Heart left ventricle (tissue), 16 donors: ENCODE measurements at regions of chr16 and their contacts with region 1.

Region 1: DNA sequence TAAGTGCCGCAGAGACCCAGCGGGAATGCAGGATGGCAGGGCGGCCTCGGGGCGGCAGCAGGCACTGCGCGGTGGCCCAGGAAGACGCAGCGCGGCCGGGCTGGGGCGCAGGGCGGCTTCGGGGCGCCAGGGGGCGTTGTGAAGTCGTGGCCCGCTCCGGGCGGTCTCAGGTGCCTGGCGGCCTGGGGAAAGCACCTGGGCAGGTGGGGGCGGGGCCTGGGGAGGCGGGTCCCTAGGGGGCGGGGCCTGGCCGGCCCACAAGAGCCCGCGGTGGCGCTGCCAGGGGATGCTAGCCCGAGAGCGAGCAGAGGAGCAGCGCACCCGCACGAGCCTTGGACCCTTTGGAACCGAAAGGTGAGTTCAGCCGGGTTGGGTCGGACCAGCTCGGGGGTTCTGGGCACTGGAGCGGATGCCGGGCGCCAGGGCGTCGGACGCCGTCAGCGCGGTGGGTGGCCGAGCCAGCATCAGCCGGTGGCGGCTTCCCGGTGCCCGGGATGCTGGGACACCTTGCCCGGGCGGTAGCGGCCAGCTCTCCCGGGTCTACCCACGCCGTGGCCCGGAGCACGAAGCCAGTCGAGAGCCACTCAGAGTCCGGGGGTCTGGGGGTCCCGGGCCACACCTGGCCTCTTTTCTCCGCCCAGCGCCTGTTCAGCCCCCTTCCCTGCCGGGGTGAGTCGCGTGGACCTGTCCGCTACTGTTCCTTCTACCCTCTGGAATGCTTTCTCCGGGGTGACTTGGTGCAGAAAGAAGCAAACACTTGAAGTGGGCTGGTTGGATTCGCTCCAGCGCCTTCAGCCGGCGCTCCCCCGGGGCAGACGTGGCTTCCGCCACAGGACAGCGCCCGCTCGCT is at the start of gene SCNN1G:
- DNase-seq: peak; percentile 52 to 87 (median 68)
- ATAC-seq: peak; percentile 79 to 97 (median 96)
- H3K4me3 ChIP-seq: peak within 1 kb of the TSS in 11 of 12 donors; percentile 34 to 52 (median 44)
- H3K27ac ChIP-seq: no peak within 1 kb of the TSS
- H3K4me1 ChIP-seq: peaks cover 0 to 28% (median 12%) of the 10 kb centered on the region in 12 donors
- H3K27me3 ChIP-seq: peaks cover 10 to 58% (median 30%) of the 10 kb centered on the region in 9 donors
- CTCF ChIP-seq: peak; percentile 78 to 99 (median 94)
- POLR2A ChIP-seq: no peak
- total RNA-seq, gene SCNN1G: 0.08 to 0.20 (median 0.16) TPM in 3 of 9 donors, not detected in the others

Region 2: GRCh38 chr16:23248261-23249194 is 65.8 kb after region 1 on chr16:
- intact Hi-C with region 1: loop called in 1 of 10 experiments (anchors 10 kb)
- DNase-seq: no peak
- ATAC-seq: peak in 3 of 4 donors; percentile 13 to 27 (median 27)
- H3K4me3 ChIP-seq: no peak overlapping the region
- H3K27ac ChIP-seq: no peak overlapping the region
- H3K4me1 ChIP-seq: peaks cover 0 to 15% (median 0%) of the 10 kb centered on the region in 12 donors
- H3K27me3 ChIP-seq: no peaks in the 10 kb centered on the region
- CTCF ChIP-seq: no peak
- POLR2A ChIP-seq: no peak

Region 3: DNA sequence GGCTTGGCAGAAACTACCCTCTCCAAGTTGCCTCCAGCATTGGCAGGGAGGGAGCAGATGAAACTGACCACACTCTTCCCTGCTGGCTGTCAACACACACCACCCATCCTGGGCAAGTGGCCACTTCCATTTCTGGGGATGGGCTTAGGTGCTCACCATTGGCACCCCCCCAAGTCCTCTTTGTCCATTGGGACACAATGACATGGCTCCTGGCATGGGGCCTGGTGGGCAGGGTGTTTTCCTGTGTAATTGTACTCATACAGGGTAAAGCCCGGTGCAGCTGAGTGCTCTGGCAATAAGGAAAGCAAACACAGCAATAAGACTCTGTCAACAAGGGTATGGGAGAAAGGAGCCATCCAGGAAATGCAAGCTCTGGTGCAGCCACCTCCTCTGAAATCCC is 142.0 kb after region 1 on chr16:
- intact Hi-C with region 1: loop called in 1 of 10 experiments (anchors 10 kb)
- DNase-seq: peak; percentile 32 to 70 (median 64)
- ATAC-seq: peak in 3 of 4 donors; percentile 36 to 89 (median 74)
- H3K4me3 ChIP-seq: no peak overlapping the region
- H3K27ac ChIP-seq: peak overlapping the region in 1 of 12 donors; percentile 8
- H3K4me1 ChIP-seq: peaks cover 0 to 10% (median 0%) of the 10 kb centered on the region in 12 donors
- H3K27me3 ChIP-seq: no peaks in the 10 kb centered on the region
- CTCF ChIP-seq: no peak
- POLR2A ChIP-seq: no peak

Region 4: DNA sequence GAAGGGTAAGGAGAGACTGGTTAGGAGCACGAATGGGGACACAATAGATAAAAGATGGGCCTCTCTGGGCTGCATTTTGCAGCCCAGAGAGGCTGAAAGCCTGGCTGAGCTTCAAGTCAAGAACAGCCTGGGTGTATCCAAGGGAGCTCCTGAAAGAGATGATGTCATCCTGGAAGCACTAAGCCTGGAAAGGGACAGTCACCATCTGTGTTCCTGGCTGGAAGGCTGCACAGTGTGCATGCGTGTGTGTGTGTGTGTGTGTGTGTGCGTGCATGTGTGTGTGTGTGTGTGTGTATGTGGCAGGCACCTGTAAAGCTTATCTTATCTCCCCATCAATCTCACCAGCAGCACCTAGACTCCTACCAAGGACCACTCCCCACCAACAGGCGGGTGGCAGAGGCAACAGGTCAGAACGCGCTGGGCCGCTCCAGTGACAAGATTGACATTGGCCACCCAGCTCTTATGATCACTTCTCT is 226.2 kb after region 1 on chr16:
- intact Hi-C with region 1: loop called in 1 of 10 experiments (anchors 10 kb)
- DNase-seq: peak in 4 of 5 donors; percentile 47 to 68 (median 60)
- ATAC-seq: peak; percentile 95 to 98 (median 96)
- H3K4me3 ChIP-seq: no peak overlapping the region
- H3K27ac ChIP-seq: peak overlapping the region in 2 of 12 donors; percentile 24 to 54
- H3K4me1 ChIP-seq: peaks cover 0 to 6% (median 0%) of the 10 kb centered on the region in 12 donors
- H3K27me3 ChIP-seq: no peaks in the 10 kb centered on the region
- CTCF ChIP-seq: no peak
- POLR2A ChIP-seq: no peak

Region 5: DNA sequence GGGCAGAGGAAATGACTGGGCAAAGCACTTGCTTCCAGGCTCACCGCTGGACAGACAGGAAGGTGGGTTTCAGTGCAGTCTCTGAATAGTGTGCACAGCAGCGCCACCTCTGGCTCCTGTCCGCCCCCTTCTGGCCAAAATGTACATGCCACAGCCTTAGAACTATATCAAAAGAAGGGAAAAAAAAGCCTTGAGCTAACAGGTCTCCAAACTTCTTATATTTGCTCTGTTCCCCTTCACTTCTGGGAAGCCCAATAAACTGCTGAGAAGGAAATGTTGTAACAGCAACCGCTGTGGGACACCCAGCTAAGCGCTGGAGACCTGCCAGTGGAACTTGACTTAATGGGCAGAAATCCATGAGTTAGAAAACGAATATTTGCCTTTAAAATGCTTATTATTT is 252.8 kb after region 1 on chr16:
- intact Hi-C with region 1: loop called (anchors 1 to 2 kb)
- DNase-seq: peak in 4 of 5 donors; percentile 21 to 71 (median 36)
- ATAC-seq: peak; percentile 58 to 82 (median 76)
- H3K4me3 ChIP-seq: no peak overlapping the region
- H3K27ac ChIP-seq: peak overlapping the region in 1 of 12 donors; percentile 33
- H3K4me1 ChIP-seq: peaks cover 0 to 12% (median 0%) of the 10 kb centered on the region in 12 donors
- H3K27me3 ChIP-seq: no peaks in the 10 kb centered on the region
- CTCF ChIP-seq: peak; percentile 49 to 88 (median 74)
- POLR2A ChIP-seq: no peak